Caco-2 (cell line): ENCODE measurements at regions of chr12 and their contacts with region 1.

Region 1: GRCh38 chr12:45257185-45257930 is 41.5 kb downstream of the ANO6 start:
- DNase-seq: no peak
- H3K4me3 ChIP-seq: no peak overlapping the region
- H3K4me3 Mint-ChIP-seq: no peak overlapping the region
- H3K27ac Mint-ChIP-seq: peak overlapping the region; percentile 71
- H3K4me1 ChIP-seq: peaks cover 72% of the 10 kb centered on the region
- H3K4me1 Mint-ChIP-seq: peaks cover 53% of the 10 kb centered on the region
- H3K27me3 ChIP-seq: no peaks in the 10 kb centered on the region
- H3K27me3 Mint-ChIP-seq: no peaks in the 10 kb centered on the region
- CTCF ChIP-seq: no peak

Region 2: GRCh38 chr12:45130881-45131281 is 126.5 kb before region 1 on chr12:
- CTCF ChIA-PET with region 1: no interaction called
- POLR2A ChIA-PET with region 1: no interaction called
- intact Hi-C with region 1: loop called (anchors 5 kb)
- DNase-seq: peak; percentile 65 to 74
- H3K4me3 ChIP-seq: no peak overlapping the region
- H3K4me3 Mint-ChIP-seq: no peak overlapping the region
- H3K27ac Mint-ChIP-seq: no peak overlapping the region
- H3K4me1 ChIP-seq: no peaks in the 10 kb centered on the region
- H3K4me1 Mint-ChIP-seq: no peaks in the 10 kb centered on the region
- H3K27me3 ChIP-seq: no peaks in the 10 kb centered on the region
- H3K27me3 Mint-ChIP-seq: no peaks in the 10 kb centered on the region
- CTCF ChIP-seq: peak; percentile 77 to 85

Region 3: GRCh38 chr12:45191239-45191638 is 66.1 kb before region 1 on chr12:
- CTCF ChIA-PET with region 1: interaction called, 5 read pairs
- POLR2A ChIA-PET with region 1: no interaction called
- intact Hi-C with region 1: loop called (anchors 1 kb)
- DNase-seq: no peak
- H3K4me3 ChIP-seq: no peak overlapping the region
- H3K4me3 Mint-ChIP-seq: no peak overlapping the region
- H3K27ac Mint-ChIP-seq: peak overlapping the region; percentile 95
- H3K4me1 ChIP-seq: peaks cover 57% of the 10 kb centered on the region
- H3K4me1 Mint-ChIP-seq: peaks cover 44% of the 10 kb centered on the region
- H3K27me3 ChIP-seq: no peaks in the 10 kb centered on the region
- H3K27me3 Mint-ChIP-seq: no peaks in the 10 kb centered on the region
- CTCF ChIP-seq: no peak

Region 4: DNA sequence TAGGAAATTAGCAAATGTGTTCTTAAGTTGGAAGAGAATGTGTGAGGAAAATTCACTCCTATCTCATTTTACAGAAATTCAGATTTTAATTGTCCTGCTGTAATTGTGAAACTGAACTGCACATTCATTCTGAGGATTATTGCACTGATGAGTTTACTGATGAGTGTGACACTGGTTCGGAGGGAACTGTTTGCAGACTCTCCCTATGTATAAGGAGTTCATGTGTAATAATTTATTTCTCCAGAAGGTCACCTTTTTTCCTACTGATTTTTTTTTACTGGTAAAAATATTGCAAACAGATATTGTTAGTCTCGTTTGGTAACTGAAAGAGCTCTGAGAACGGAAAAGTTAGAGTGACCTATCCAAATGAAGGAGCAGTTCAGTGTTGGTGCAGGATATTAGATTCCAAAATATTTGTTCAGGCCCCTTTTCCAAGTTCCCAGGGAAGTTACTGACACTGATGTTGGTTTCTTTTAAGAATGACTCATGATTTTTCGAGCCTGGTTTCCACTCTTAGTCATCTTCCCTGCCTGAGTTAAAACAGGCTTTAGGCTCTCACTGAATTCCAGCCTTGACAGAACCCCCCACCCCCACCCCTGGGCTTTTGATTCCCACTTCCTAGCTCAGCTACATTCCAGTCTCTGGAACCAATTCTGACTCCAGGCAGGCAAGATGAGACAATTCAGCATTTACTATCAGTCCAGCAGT is 23.1 kb before region 1 on chr12:
- CTCF ChIA-PET with region 1: interaction called, 3 read pairs
- POLR2A ChIA-PET with region 1: interaction called, 3 read pairs
- intact Hi-C with region 1: loop called (anchors 1 kb)
- DNase-seq: peak; percentile 47 to 55
- H3K4me3 ChIP-seq: no peak overlapping the region
- H3K4me3 Mint-ChIP-seq: peak overlapping the region; percentile 27
- H3K27ac Mint-ChIP-seq: peak overlapping the region; percentile 77
- H3K4me1 ChIP-seq: peaks cover 59% of the 10 kb centered on the region
- H3K4me1 Mint-ChIP-seq: peaks cover 53% of the 10 kb centered on the region
- H3K27me3 ChIP-seq: no peaks in the 10 kb centered on the region
- H3K27me3 Mint-ChIP-seq: no peaks in the 10 kb centered on the region
- CTCF ChIP-seq: no peak

Region 5: GRCh38 chr12:45298716-45299692 is 41.6 kb after region 1 on chr12:
- CTCF ChIA-PET with region 1: interaction called, 6 read pairs
- POLR2A ChIA-PET with region 1: interaction called, 3 read pairs
- intact Hi-C with region 1: loop called (anchors 1 kb)
- DNase-seq: peak in 1 of 2 experiments; percentile 45
- H3K4me3 ChIP-seq: no peak overlapping the region
- H3K4me3 Mint-ChIP-seq: no peak overlapping the region
- H3K27ac Mint-ChIP-seq: peak overlapping the region; percentile 72
- H3K4me1 ChIP-seq: peaks cover 71% of the 10 kb centered on the region
- H3K4me1 Mint-ChIP-seq: peaks cover 30% of the 10 kb centered on the region
- H3K27me3 ChIP-seq: no peaks in the 10 kb centered on the region
- H3K27me3 Mint-ChIP-seq: no peaks in the 10 kb centered on the region
- CTCF ChIP-seq: no peak